ENCODE measurements at regions of chr3 and their contacts with region 1.

Region 1: GRCh38 chr3:152695840-152696239 is 139.1 kb upstream of the P2RY1 start:
- DNase-seq: no peak
- H3K4me3 ChIP-seq: no peak overlapping the region
- H3K27ac ChIP-seq: no peak overlapping the region
- H3K4me1 ChIP-seq: no peaks in the 10 kb centered on the region
- H3K27me3 ChIP-seq: no peaks in the 10 kb centered on the region
- CTCF ChIP-seq: no peak

Region 2: GRCh38 chr3:153026026-153026425 is 330.2 kb after region 1 on chr3:
- CTCF ChIA-PET with region 1: no interaction called
- POLR2A ChIA-PET with region 1: no interaction called
- intact Hi-C with region 1: no loop called
- DNase-seq: no peak
- H3K4me3 ChIP-seq: no peak overlapping the region
- H3K27ac ChIP-seq: no peak overlapping the region
- H3K4me1 ChIP-seq: no peaks in the 10 kb centered on the region
- H3K27me3 ChIP-seq: no peaks in the 10 kb centered on the region
- CTCF ChIP-seq: peak; percentile 95

Region 3: GRCh38 chr3:153195349-153195879 is 499.6 kb after region 1 on chr3:
- CTCF ChIA-PET with region 1: interaction called, 15 read pairs
- POLR2A ChIA-PET with region 1: no interaction called
- intact Hi-C with region 1: no loop called
- DNase-seq: no peak
- H3K4me3 ChIP-seq: no peak overlapping the region
- H3K27ac ChIP-seq: no peak overlapping the region
- H3K4me1 ChIP-seq: no peaks in the 10 kb centered on the region
- H3K27me3 ChIP-seq: no peaks in the 10 kb centered on the region
- CTCF ChIP-seq: no peak

Measured in PC-9 (cell line).